CD14-positive monocyte (primary cell): ENCODE measurements at regions of chr3 and their contacts with region 1.

Region 1: DNA sequence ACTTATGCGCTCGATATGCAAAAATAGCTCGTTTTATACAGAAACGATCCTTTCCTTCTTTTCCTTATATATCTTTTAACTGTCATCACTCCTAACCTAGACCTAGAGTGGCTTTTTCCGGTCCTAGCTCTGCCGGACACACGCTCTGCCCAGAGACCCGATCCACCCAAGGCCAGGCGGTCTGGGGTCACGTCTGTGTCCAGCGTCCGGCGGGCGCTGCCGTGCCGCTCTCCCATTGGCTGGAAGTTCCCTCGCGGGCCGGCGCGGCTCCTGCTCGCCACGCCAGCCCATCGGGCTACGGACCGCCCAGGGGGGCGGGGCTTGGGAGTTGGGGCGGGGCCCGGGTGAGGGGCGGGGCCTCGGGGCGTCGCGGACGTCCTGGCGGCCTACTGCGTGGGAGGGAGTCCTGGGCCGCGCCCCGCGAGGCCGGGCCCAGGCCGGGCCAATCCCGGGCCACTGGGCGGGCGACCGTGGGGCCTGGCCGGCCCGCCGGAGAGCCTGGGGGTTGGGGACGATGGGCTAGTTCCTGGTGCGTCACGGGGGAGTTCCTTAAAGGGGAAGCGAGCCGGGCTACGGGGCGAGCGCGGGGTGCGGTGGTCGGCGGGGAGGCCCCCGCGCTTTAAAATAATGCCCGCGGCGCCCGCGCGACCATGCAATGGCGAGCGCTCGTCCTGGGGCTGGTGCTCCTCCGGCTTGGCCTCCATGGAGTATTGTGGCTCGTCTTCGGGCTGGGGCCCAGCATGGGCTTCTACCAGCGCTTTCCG is at the start of gene EDEM1:
- DNase-seq: peak; percentile 95 to 97 (median 95)
- H3K4me3 ChIP-seq: peak within 1 kb of the TSS; percentile 60 to 97 (median 91)
- H3K4me3 Mint-ChIP-seq: peak within 1 kb of the TSS; percentile 95 to 99
- H3K27ac ChIP-seq: peak within 1 kb of the TSS; percentile 76 to 98
- H3K27ac Mint-ChIP-seq: peak within 1 kb of the TSS; percentile 93 to 100 (median 99)
- H3K4me1 ChIP-seq: peaks cover 69 to 83% of the 10 kb centered on the region in 2 donors
- H3K4me1 Mint-ChIP-seq: peaks cover 71% of the 10 kb centered on the region
- H3K27me3 ChIP-seq: no peaks in the 10 kb centered on the region
- H3K27me3 Mint-ChIP-seq: peaks cover 0 to 2% (median 0%) of the 10 kb centered on the region in 3 donors
- CTCF ChIP-seq: no peak
- polyA plus RNA-seq, gene EDEM1: 17.5 to 31.7 (median 23.7) TPM

Region 2: DNA sequence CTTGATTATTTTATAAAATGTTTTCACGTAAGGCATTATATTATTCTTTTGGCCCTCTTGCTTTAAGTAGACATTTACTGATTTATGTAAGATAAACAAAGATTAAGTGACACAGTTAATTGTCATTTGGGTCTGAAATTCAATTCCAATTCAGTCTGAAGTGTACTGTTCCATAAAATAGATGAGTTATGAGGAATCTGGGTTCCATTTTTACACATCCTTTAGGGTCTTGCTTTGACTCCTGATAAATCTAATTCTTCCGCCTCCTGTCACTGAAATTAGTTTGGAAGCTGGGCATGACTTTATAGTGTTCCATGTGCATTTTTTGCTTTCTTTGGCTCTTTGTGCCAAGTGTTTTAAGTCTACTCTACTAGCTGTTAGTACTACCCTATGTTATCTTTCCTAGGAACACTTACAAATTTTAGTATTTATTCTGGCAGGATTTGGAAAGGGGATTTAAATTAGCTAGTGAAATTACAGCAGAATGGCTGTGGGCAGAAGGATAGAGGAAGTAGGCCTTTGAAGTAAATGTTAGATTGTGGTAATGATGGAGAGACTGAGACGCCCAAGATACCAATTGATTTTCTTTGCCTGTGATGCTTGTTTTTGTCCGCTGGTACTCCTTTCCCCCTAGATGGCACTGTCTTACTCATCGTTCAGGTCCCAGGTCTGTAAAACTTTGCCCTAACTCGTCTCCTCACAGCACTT is 51.0 kb before region 1 on chr3:
- intact Hi-C with region 1: loop called (anchors 5 kb)
- DNase-seq: peak; percentile 54 to 76 (median 54)
- H3K4me3 ChIP-seq: no peak overlapping the region
- H3K4me3 Mint-ChIP-seq: peak overlapping the region in 1 of 2 donors; percentile 54
- H3K27ac ChIP-seq: peak overlapping the region; percentile 29 to 94
- H3K27ac Mint-ChIP-seq: peak overlapping the region; percentile 73 to 98 (median 93)
- H3K4me1 ChIP-seq: peaks cover 63 to 71% of the 10 kb centered on the region in 2 donors
- H3K4me1 Mint-ChIP-seq: peaks cover 80% of the 10 kb centered on the region
- H3K27me3 ChIP-seq: no peaks in the 10 kb centered on the region
- H3K27me3 Mint-ChIP-seq: no peaks in the 10 kb centered on the region
- CTCF ChIP-seq: peak; percentile 45